GM18951 (cell line): ENCODE measurements at regions of chr7 and their contacts with region 1.

Region 1: DNA sequence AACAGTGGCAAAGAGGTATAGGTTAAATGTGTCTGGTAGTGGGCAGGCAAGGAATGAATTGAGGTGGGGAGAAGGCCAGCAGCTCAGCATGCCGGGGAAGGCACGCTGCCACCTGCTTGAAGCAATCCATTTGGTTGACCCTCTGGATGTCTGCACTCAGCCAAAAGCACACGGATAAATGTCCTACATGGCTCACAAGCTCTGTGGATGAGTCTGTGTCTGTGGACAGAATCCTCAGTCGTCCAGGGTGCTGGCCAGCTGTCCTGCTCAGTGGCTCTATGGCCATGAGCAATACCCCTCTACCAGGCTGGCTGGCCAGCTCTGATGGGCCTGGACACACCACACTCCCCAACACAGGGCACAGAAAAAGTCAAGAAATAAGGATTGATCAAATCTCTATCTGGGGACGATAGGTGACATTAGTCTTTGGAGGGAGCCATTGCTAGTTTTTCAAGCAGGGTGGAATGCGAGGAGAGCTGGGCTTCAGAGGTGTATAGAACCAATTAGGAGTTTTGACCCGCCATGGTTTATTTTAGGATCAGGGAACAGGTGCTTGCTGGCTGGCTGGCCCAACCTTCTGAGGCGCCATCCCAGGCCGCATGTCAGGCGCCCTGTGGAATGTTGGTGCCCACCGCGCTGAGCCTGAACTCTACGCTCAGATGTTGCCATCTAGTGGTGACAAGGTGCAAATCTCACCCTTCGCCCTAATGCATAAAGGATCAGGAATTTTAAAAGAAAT is 493.4 kb downstream of the TNS3 start:
- POLR2A ChIP-seq: no peak

Region 2: DNA sequence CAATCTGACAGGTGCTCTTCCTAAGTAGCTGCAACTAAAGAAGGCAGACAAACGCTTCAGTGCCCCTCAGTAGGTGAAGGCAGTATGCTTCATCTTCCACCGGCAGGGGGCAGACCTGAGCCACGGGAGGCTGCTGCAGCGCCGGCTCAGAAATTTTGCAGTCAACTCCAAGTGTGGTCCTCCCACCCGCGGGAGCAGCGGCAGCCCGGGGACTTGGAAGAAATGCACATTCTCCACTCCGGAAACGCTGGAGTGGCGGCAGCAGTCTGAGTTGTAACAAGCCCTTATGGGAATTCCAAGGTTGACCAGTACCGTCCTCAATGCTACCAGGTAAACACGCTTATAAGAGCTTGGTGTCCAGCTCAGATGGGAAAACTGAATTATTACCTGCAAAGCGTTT is 1170.8 kb before region 1 on chr7:
- in situ Hi-C with region 1: loop called (anchors 25 kb)
- POLR2A ChIP-seq: no peak

Region 3: DNA sequence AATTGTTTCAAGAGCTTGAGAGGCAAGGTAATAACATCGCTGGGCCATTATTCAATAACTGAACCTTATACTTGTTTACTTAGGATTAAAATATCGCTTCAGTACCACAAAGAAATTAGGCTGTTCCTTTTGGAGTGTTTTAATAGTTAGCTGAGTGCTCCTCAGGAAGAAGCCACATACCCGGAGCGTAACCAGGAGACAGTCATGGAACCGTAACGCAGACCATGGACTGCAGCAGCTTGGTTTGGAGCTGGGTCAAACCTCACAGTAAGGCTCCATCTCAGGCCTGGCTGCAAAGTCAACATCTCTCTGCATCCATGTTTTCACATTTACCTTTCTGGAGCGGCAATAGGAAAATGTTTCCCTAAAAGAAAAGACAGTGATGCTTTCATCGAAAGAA is 105.6 kb before region 1 on chr7:
- in situ Hi-C with region 1: no loop called
- POLR2A ChIP-seq: no peak